ENCODE measurements at regions of chr14 and their contacts with region 1.

Region 1: GRCh38 chr14:76918751-76919543 is 92.7 kb downstream of the LRRC74A start:
- DNase-seq: no peak
- ATAC-seq: peak; percentile 11
- H3K4me3 ChIP-seq: no peak overlapping the region
- H3K27ac ChIP-seq: no peak overlapping the region
- H3K4me1 ChIP-seq: peaks cover 5% of the 10 kb centered on the region
- H3K27me3 ChIP-seq: no peaks in the 10 kb centered on the region
- CTCF ChIP-seq: 0 out of 6 replicates have a peak, but pooled peaks of 1 of the 3 experiments have one; percentile 8
- EP300 ChIP-seq: no peak
- POLR2A ChIP-seq: no peak
- RAD21 ChIP-seq: peak; percentile 36; the same call in 1 of the 2 replicates

Region 2: GRCh38 chr14:76742966-76743365 is 176.0 kb before region 1 on chr14:
- CTCF ChIA-PET with region 1: no interaction called
- POLR2A ChIA-PET with region 1: no interaction called
- RAD21 ChIA-PET with region 1: no interaction called
- SMC1A ChIA-PET with region 1: no interaction called
- in situ Hi-C with region 1: no loop called
- intact Hi-C with region 1: no loop called
- DNase-seq: no peak
- ATAC-seq: no peak
- H3K4me3 ChIP-seq: no peak overlapping the region
- H3K27ac ChIP-seq: no peak overlapping the region
- H3K4me1 ChIP-seq: no peaks in the 10 kb centered on the region
- H3K27me3 ChIP-seq: no peaks in the 10 kb centered on the region
- CTCF ChIP-seq: no peak
- EP300 ChIP-seq: no peak
- POLR2A ChIP-seq: no peak
- RAD21 ChIP-seq: no peak

Region 3: DNA sequence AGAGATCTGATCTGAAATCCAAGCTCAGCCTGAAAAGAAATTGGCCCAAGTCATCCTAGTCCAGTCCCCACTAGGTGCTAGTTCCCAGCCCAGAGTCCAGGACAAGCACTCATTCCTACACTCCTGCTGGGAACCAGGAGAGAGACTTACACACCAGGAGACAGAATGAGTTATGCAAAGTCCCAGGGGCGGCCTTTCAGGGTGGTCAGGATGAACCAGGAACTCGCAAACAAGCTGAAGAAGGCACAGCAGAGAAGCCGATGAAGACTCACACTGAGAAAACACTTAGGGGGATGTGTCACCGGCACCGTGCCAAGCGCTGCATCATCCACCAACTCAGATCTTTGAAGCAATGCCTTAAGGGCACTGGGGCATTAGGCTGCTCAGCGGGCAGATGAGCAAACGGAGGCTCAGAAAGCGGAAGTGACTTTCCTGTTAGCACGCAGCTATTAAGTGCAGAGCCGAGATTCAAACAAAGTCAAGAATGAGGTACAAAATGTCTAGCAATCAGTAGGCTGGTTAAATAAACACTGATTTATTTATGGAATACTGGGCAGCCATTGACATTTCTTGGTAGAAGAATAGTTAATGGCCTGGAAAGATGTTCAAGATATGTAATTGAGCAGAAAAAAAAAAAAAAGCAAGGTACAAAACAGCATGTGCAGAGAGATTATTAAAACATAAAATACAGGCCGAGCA is 14.1 kb before region 1 on chr14:
- CTCF ChIA-PET with region 1: interaction called, 14 read pairs
- POLR2A ChIA-PET with region 1: no interaction called
- RAD21 ChIA-PET with region 1: interaction called, 10 read pairs
- SMC1A ChIA-PET with region 1: interaction called, 3 read pairs
- in situ Hi-C with region 1: no loop called
- intact Hi-C with region 1: no loop called
- DNase-seq: peak; percentile 84
- ATAC-seq: peak; percentile 93
- H3K4me3 ChIP-seq: no peak overlapping the region
- H3K27ac ChIP-seq: peak overlapping the region; percentile 38
- H3K4me1 ChIP-seq: peaks cover 11% of the 10 kb centered on the region
- H3K27me3 ChIP-seq: no peaks in the 10 kb centered on the region
- CTCF ChIP-seq: no peak
- EP300 ChIP-seq: no peak
- POLR2A ChIP-seq: no peak
- RAD21 ChIP-seq: no peak

Region 4: DNA sequence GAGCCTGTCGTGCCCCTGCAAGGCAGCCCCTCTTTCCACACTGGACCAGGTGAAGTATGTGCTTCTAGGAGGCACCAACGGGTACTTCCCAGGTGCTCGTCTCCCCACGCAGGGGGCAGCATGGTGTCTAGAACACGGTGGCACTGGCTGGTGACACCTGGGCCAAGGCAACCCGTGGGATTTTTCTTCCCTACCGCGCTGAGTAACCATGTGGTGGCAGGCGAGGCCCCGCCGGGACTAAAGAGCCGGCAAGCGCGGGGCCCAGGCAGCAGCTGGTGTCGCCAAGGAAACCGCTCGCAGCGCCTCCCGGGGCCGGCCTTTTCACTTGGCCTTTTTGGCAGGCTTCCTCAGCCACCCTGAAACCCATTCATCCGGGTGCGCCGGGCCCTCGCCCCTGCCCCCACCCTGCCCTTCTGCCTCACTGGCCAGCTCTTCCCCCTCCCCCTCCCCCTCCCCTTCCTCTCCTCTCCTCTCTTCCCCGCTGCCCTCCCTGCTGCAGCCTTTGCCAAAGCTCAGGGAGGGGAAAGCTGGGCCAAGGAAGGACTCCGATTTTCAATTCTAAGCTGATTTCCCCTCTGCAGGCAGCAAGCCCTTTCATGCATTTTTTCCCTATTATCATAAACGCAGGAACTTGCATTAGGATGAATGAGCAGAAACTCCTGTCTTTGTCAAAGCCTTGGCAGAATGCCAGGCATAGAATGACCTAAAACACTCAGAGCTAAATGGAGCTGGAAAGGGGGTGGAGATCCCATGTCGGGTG is 28.3 kb after region 1 on chr14:
- CTCF ChIA-PET with region 1: interaction called, 189 read pairs
- POLR2A ChIA-PET with region 1: interaction called, 53 read pairs
- RAD21 ChIA-PET with region 1: interaction called, 233 read pairs
- SMC1A ChIA-PET with region 1: interaction called, 233 read pairs
- in situ Hi-C with region 1: no loop called
- intact Hi-C with region 1: loop called (anchors 2 kb)
- DNase-seq: peak; percentile 67
- ATAC-seq: peak; percentile 87
- H3K4me3 ChIP-seq: no peak overlapping the region
- H3K27ac ChIP-seq: peak overlapping the region; percentile 64
- H3K4me1 ChIP-seq: peaks cover 29% of the 10 kb centered on the region
- H3K27me3 ChIP-seq: no peaks in the 10 kb centered on the region
- CTCF ChIP-seq: peak; percentile 45 to 72 (median 58)
- EP300 ChIP-seq: peak in 1 of 2 experiments; percentile 65; a peak in 2 of 4 replicates
- POLR2A ChIP-seq: no peak
- RAD21 ChIP-seq: peak; percentile 72

Region 5: GRCh38 chr14:76977793-76978720 is 59.1 kb after region 1 on chr14:
- CTCF ChIA-PET with region 1: interaction called, 4 read pairs
- POLR2A ChIA-PET with region 1: no interaction called
- RAD21 ChIA-PET with region 1: interaction called, 10 read pairs
- SMC1A ChIA-PET with region 1: interaction called, 5 read pairs
- in situ Hi-C with region 1: no loop called
- intact Hi-C with region 1: no loop called
- DNase-seq: peak; percentile 81
- ATAC-seq: peak; percentile 98
- H3K4me3 ChIP-seq: no peak overlapping the region
- H3K27ac ChIP-seq: peak overlapping the region; percentile 65
- H3K4me1 ChIP-seq: peaks cover 20% of the 10 kb centered on the region
- H3K27me3 ChIP-seq: no peaks in the 10 kb centered on the region
- CTCF ChIP-seq: no peak
- EP300 ChIP-seq: peak; percentile 64 to 75; a peak in 2 of 4 replicates
- POLR2A ChIP-seq: peak; percentile 72
- RAD21 ChIP-seq: 0 out of 2 replicates have a peak, but pooled peaks have one; percentile 20

Region 6: GRCh38 chr14:77033622-77034521 is 114.9 kb after region 1 on chr14:
- CTCF ChIA-PET with region 1: interaction called, 25 read pairs
- POLR2A ChIA-PET with region 1: interaction called, 5 read pairs
- RAD21 ChIA-PET with region 1: interaction called, 23 read pairs
- SMC1A ChIA-PET with region 1: interaction called, 17 read pairs
- in situ Hi-C with region 1: no loop called
- intact Hi-C with region 1: no loop called
- DNase-seq: peak; percentile 72
- ATAC-seq: peak; percentile 86
- H3K4me3 ChIP-seq: peak overlapping the region; percentile 78
- H3K27ac ChIP-seq: peak overlapping the region; percentile 99
- H3K4me1 ChIP-seq: peaks cover 61% of the 10 kb centered on the region
- H3K27me3 ChIP-seq: no peaks in the 10 kb centered on the region
- CTCF ChIP-seq: no peak
- EP300 ChIP-seq: peak in 1 of 2 experiments; percentile 47; a peak in 3 of 4 replicates
- POLR2A ChIP-seq: peak; percentile 85
- RAD21 ChIP-seq: no peak

Region 7: DNA sequence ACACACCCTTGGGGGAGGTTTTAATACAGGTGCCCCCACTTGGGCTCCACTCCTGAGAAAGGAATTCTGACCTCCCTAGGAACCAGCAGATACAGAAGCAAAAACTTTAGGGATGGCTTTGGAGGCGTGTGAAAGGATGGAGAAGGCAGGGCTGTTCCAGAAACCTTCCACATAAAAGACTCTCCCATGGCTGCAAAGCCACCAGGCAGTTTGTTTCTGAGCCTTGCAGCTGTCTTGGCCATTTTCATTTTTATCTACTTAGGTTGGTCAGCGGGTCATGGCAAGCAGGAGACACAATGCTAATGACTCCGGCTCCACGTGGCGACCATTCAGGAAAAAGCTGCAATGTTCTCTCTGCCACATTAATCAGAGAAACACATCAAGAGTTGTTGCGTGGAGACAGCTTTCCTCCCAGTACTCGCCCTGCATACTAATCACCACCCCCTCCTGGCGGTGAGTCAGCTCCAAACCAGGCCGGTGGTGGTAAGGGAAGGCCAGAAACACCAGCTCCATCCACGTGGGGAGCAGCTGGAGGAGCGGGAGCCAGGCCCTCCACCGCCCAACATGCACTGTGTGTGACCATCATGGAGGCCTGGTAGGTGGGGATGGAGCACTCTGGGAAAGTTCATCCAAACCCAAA is 140.4 kb after region 1 on chr14:
- CTCF ChIA-PET with region 1: interaction called, 170 read pairs
- POLR2A ChIA-PET with region 1: interaction called, 11 read pairs
- RAD21 ChIA-PET with region 1: interaction called, 166 read pairs
- SMC1A ChIA-PET with region 1: interaction called, 174 read pairs
- in situ Hi-C with region 1: loop called (anchors 10 kb)
- intact Hi-C with region 1: no loop called
- DNase-seq: no peak
- ATAC-seq: peak; percentile 57
- H3K4me3 ChIP-seq: no peak overlapping the region
- H3K27ac ChIP-seq: no peak overlapping the region
- H3K4me1 ChIP-seq: no peaks in the 10 kb centered on the region
- H3K27me3 ChIP-seq: no peaks in the 10 kb centered on the region
- CTCF ChIP-seq: peak in 2 of 3 experiments; percentile 1 to 18; a peak in 1 of 6 replicates
- EP300 ChIP-seq: no peak
- POLR2A ChIP-seq: no peak
- RAD21 ChIP-seq: peak; percentile 27; the same call in 1 of the 2 replicates

Measured in GM12878 (cell line).